Right ventricle myocardium inferior (tissue), 1 donor: ENCODE measurements at regions of chr19 and their contacts with region 1.

Region 1: GRCh38 chr19:35693830-35694599 is 10.3 kb upstream of the ZBTB32 start:
- DNase-seq: peak; percentile 89
- ATAC-seq: peak; percentile 99

Region 2: GRCh38 chr19:35822579-35822978 is 128.6 kb after region 1 on chr19:
- intact Hi-C with region 1: loop called (anchors 5 kb)
- DNase-seq: no peak
- ATAC-seq: no peak